Panc1 (cell line): ENCODE measurements at regions of chr7 and their contacts with region 1.

Region 1: GRCh38 chr7:6008668-6009611 is at the starts of genes AIMP2 and PMS2:
- DNase-seq: peak; percentile 99
- ATAC-seq: peak; percentile 98
- H3K4me3 ChIP-seq: peak within 1 kb of the TSS; percentile 74 to 87
- H3K27ac ChIP-seq: peak within 1 kb of the TSS; percentile 87
- H3K4me1 ChIP-seq: peaks cover 24% of the 10 kb centered on the region; the same call in 1 of the 2 replicates
- H3K27me3 ChIP-seq: no peaks in the 10 kb centered on the region
- CTCF ChIP-seq: no peak
- total RNA-seq, gene AIMP2: 126 TPM
- total RNA-seq, gene PMS2: 40.2 TPM

Region 2: GRCh38 chr7:5869691-5870090 is 139.2 kb before region 1 on chr7:
- CTCF ChIA-PET with region 1: no interaction called
- POLR2A ChIA-PET with region 1: no interaction called
- in situ Hi-C with region 1: no loop called
- intact Hi-C with region 1: loop called (anchors 5 kb)
- DNase-seq: no peak
- ATAC-seq: no peak
- H3K4me3 ChIP-seq: no peak overlapping the region
- H3K27ac ChIP-seq: no peak overlapping the region
- H3K4me1 ChIP-seq: no peaks in the 10 kb centered on the region
- H3K27me3 ChIP-seq: no peaks in the 10 kb centered on the region; the same call in 1 of the 2 replicates
- CTCF ChIP-seq: no peak

Region 3: GRCh38 chr7:6106140-6106904 is 97.4 kb after region 1 on chr7:
- CTCF ChIA-PET with region 1: no interaction called
- POLR2A ChIA-PET with region 1: interaction called, 10 read pairs
- in situ Hi-C with region 1: no loop called
- intact Hi-C with region 1: no loop called
- DNase-seq: no peak
- ATAC-seq: peak; percentile 5; the same call in 1 of the 2 replicates
- H3K4me3 ChIP-seq: peak overlapping the region; percentile 70 to 92
- H3K27ac ChIP-seq: peak overlapping the region; percentile 80
- H3K4me1 ChIP-seq: peaks cover 14% of the 10 kb centered on the region; the same call in 1 of the 2 replicates
- H3K27me3 ChIP-seq: no peaks in the 10 kb centered on the region
- CTCF ChIP-seq: no peak; the same call in 1 of the 2 replicates